Stomach (tissue), 19 donors: ENCODE measurements at regions of chr11 and their contacts with region 1.

Region 1: DNA sequence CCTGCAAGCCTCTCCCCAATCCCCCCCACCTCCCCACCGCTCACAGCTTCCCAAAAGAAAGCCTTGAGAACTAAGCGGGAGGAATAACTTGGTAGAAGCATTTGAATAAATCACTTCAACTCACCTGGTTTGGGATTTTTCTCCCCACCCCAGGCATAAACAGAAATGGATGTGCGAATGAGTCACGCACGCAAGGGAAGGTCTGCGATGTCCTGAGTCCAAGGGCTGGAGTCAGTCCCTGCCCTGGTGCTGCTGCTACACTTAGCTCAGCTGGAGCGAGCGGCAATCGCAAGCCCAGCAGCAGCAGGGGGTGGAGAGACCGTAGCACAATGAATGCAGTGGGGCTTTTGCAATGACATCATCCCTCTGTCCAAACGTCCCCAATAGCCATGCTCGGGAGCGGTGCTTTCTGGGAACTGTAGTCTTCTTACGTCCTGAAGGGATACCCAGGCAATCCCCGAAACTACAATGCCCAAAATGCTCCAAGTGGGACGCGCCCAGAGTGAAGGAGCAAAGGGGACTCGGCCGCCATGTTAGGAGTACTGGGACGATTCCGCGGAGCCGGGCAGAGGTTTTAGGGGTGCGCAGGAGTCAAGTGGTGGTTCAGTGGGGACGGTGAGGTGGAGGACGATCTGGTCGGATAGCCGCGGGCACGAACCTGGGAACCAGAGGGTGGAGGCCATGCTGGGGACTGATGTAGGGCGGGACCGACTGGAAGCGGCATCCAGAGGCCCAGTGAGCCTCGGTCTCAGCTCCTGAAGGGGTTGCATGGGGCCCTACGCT is at the start of gene RAB30:
- DNase-seq: peak; percentile 96 to 100
- H3K4me3 ChIP-seq: peak within 1 kb of the TSS; percentile 62 to 79 (median 68)
- H3K27ac ChIP-seq: peak within 1 kb of the TSS; percentile 93 to 97 (median 95)
- H3K4me1 ChIP-seq: peaks cover 14 to 70% (median 38%) of the 10 kb centered on the region in 4 donors
- H3K27me3 ChIP-seq: no peaks in the 10 kb centered on the region
- CTCF ChIP-seq: no peak
- EP300 ChIP-seq: no peak
- POLR2A ChIP-seq: peak in 2 of 4 donors; percentile 74 to 81
- total RNA-seq, gene RAB30: 0.29 to 14.0 (median 3.9) TPM

Region 2: DNA sequence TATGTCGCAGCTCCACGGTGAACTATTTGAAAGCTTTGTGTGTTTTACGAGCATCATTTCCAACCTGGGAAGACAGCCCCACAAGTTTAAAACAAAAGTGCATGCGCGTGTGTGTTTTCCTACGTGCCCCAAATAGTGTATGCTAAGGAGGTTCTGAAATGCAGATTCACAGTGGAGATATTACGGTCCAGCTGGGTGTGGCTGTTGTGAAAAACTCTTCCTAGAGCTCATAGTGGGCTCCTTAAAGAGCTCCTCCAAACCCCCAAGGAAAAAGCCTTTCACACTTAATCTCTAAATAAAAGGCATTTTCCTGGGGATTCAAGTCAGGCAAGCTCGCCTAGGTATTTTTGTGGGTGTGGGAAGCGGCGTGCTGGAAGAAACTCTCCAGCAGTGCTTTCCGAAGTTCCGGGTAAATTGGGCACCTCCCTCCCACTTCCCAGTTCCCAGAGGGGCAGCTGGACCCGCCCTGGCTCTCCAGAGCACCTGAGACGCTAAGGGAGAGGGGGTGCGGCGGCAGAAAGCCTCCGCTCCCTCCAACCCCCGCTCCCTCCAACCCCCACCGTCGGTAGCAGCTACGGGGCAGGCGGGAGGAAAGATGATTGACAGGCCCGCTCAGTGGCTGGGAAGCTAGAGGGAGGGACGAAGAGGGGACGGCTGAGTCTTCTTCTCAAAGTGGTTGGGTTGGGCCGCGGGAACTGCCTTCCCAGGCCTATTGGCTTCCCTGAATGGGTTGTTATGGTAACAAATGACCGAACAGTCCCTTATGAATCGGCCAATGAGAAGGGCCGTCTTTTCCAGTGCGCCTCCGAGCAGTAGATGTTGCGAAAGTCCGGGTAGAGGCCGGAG is 84.6 kb after region 1 on chr11:
- intact Hi-C with region 1: loop called (anchors 10 kb)
- DNase-seq: peak; percentile 99 to 100
- H3K4me3 ChIP-seq: peak overlapping the region; percentile 51 to 63 (median 53)
- H3K27ac ChIP-seq: peak overlapping the region; percentile 83 to 100 (median 99)
- H3K4me1 ChIP-seq: peaks cover 2 to 28% (median 24%) of the 10 kb centered on the region in 4 donors
- H3K27me3 ChIP-seq: no peaks in the 10 kb centered on the region
- CTCF ChIP-seq: no peak
- EP300 ChIP-seq: no peak
- POLR2A ChIP-seq: peak in 1 of 4 donors; percentile 26